B cell (primary cell): ENCODE measurements at regions of chr10 and their contacts with region 1.

Region 1: GRCh38 chr10:112375721-112376395 is 1.9 kb downstream of the ACSL5 start:
- DNase-seq: peak; percentile 82
- ATAC-seq: peak; percentile 84
- H3K4me3 ChIP-seq: peak overlapping the region; percentile 67 to 73 (median 68)
- H3K4me3 Mint-ChIP-seq: peak overlapping the region; percentile 99
- H3K27ac ChIP-seq: peak overlapping the region; percentile 92 to 96
- H3K27ac Mint-ChIP-seq: peak overlapping the region; percentile 99
- H3K4me1 ChIP-seq: peaks cover 25 to 29% of the 10 kb centered on the region in 2 donors
- H3K4me1 Mint-ChIP-seq: peaks cover 58% of the 10 kb centered on the region
- H3K27me3 ChIP-seq: no peaks in the 10 kb centered on the region
- H3K27me3 Mint-ChIP-seq: no peaks in the 10 kb centered on the region
- CTCF ChIP-seq: no peak

Region 2: GRCh38 chr10:112183329-112184051 is 192.4 kb before region 1 on chr10 and contains the start of gene GPAM:
- CTCF ChIA-PET with region 1: no interaction called
- POLR2A ChIA-PET with region 1: interaction called, 4 read pairs
- intact Hi-C with region 1: loop called (anchors 2 kb)
- DNase-seq: peak; percentile 96
- ATAC-seq: peak; percentile 96
- H3K4me3 ChIP-seq: peak within 1 kb of the TSS; percentile 88 to 97 (median 95)
- H3K4me3 Mint-ChIP-seq: peak within 1 kb of the TSS; percentile 97
- H3K27ac ChIP-seq: peak within 1 kb of the TSS; percentile 49 to 81
- H3K27ac Mint-ChIP-seq: peak within 1 kb of the TSS; percentile 95
- H3K4me1 ChIP-seq: peaks cover 12 to 18% of the 10 kb centered on the region in 2 donors
- H3K4me1 Mint-ChIP-seq: peaks cover 23% of the 10 kb centered on the region
- H3K27me3 ChIP-seq: no peaks in the 10 kb centered on the region
- H3K27me3 Mint-ChIP-seq: no peaks in the 10 kb centered on the region
- CTCF ChIP-seq: no peak
- total RNA-seq, gene GPAM: 8.2 and 12.0 TPM in 2 replicates

Region 3: DNA sequence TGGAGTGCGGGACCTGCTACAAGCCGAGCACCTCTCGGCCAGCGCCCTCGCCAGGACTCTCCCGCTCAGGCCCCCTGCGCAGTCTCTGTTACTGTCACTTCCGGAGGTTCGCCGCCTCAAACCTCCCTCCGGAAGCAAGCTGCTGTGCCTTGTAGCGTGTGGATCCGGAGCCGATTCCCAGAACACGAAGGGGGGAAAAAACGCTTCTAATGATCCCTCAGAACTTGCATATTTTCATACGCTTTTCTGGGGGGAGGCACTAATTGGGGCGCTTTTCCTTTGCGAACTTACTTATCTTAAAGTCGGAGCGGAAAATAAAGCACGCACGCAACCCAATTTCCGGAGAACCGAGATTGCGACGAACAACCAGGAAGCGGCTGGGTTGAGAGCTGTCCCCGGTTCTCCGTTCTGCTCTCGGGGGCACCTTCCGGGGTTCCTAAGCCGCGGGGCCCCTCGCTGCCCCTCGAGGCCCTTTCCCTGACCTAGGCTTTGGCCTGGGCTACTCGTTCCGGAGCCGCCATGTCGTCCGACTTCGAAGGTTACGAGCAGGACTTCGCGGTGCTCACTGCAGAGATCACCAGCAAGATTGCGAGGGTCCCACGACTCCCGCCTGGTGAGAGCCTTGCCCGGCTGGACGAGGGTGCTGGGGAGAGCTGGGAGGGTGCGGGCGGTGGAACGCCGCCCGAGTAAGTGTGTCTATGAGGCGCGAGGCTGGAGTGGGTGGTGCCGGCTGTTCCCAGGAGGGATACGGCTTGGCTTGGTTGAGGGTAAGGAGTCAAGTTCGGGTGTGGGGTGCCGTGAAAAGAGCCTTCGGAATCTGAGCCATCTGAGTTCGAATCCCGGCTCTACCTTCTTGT is 71.2 kb after region 1 on chr10 and contains the starts of genes VTI1A and ZDHHC6:
- CTCF ChIA-PET with region 1: no interaction called
- POLR2A ChIA-PET with region 1: interaction called, 13 read pairs
- intact Hi-C with region 1: loop called (anchors 1 kb)
- DNase-seq: peak; percentile 93
- ATAC-seq: peak; percentile 90
- H3K4me3 ChIP-seq: peak within 1 kb of the TSS; percentile 79 to 100 (median 99)
- H3K4me3 Mint-ChIP-seq: peak within 1 kb of the TSS; percentile 91
- H3K27ac ChIP-seq: peak within 1 kb of the TSS; percentile 74 to 84
- H3K27ac Mint-ChIP-seq: peak within 1 kb of the TSS; percentile 88
- H3K4me1 ChIP-seq: peaks cover 20 to 23% of the 10 kb centered on the region in 2 donors
- H3K4me1 Mint-ChIP-seq: peaks cover 49% of the 10 kb centered on the region
- H3K27me3 ChIP-seq: no peaks in the 10 kb centered on the region
- H3K27me3 Mint-ChIP-seq: no peaks in the 10 kb centered on the region
- CTCF ChIP-seq: peak; percentile 11
- total RNA-seq, gene VTI1A: 84.1 and 85.8 TPM in 2 replicates
- total RNA-seq, gene ZDHHC6: 53.9 and 61.2 TPM in 2 replicates